ENCODE measurements at regions of chrX and their contacts with region 1.

Region 1: DNA sequence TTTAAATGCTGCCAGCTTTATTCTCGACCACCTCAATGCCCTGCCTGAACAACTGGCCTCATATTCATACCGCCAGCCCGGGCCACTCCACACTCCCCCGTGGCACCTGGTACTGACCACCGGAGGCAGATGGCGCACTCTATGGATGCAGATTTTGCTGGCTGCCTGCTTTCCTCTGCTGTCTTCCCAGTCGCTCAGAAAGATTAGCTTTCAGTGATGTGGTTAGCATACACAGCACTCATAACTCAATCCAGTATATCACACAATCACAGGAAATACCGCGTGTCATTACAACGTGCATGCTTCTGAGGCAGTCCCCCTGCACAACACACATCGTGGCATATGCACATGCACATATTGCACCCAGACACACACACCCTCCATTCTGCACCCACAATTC is 147.2 kb upstream of the BCOR start:
- DNase-seq: peak; percentile 68
- H3K4me3 ChIP-seq: no peak overlapping the region
- H3K27ac ChIP-seq: peak overlapping the region in 1 of 2 experiments; percentile 92; a peak in 2 of 4 replicates
- H3K4me1 ChIP-seq: peaks cover 0 to 31% of the 10 kb centered on the region in 2 experiments; a peak in 1 of 4 replicates
- H3K27me3 ChIP-seq: peaks cover 9% of the 10 kb centered on the region; the same call in 1 of the 2 replicates
- CTCF ChIP-seq: 0 out of 2 replicates have a peak, but pooled peaks have one; percentile 16
- EP300 ChIP-seq: peak in 1 of 2 experiments; percentile 57; a peak in 2 of 4 replicates
- RAD21 ChIP-seq: peak; percentile 38; the same call in 1 of the 2 replicates

Region 2: DNA sequence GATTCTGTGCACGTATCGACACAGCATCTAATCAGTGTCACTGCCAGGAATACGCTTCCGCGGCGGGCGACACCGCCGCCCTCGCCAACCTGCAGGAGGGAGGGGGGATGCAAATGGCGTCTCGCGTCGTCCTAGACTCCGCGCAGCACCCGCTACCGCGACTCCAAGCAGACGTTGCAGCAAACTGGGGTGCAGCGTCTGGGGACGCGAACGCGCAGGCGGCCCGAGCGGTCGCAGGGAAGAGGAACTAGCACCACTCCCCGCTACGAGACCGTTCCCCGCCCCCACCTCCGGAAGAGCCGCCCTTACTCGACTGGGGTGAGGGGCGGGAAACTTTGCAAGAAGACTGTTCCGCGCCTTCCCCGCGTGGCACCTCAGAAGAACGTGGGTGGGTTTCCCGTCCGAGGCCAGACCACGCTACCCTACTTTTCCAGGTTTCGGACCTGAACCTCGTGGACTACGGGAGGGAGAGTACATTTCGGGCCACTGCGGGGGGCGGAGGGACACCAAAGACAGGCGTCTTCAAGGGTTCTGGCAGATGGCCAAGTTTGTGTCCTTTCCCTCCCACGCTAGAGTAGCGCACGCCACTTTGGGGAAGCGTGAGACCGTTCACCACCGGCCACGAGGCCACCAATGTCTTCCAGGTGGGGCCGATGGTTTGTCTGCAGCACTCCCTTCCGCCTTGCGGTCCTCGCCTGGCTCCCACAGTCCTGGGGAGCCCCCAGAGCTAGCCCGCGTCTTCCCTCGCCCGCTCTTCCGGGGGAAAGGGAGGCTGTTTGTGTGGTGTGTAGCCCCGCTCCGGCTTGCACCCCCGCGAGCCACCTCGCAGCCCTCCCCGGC is 69.2 kb before region 1 on chrX:
- CTCF ChIA-PET with region 1: interaction called, 5 read pairs
- POLR2A ChIA-PET with region 1: interaction called, 18 read pairs
- DNase-seq: peak; percentile 68
- H3K4me3 ChIP-seq: peak overlapping the region; percentile 32 to 51; a peak in 3 of 4 replicates
- H3K27ac ChIP-seq: peak overlapping the region in 1 of 2 experiments; percentile 96; a peak in 2 of 4 replicates
- H3K4me1 ChIP-seq: peaks cover 0 to 20% of the 10 kb centered on the region in 2 experiments; a peak in 2 of 4 replicates
- H3K27me3 ChIP-seq: peaks cover 10% of the 10 kb centered on the region; the same call in 1 of the 2 replicates
- CTCF ChIP-seq: no peak
- EP300 ChIP-seq: no peak
- RAD21 ChIP-seq: 0 out of 2 replicates have a peak, but pooled peaks have one; percentile 8

Region 3: DNA sequence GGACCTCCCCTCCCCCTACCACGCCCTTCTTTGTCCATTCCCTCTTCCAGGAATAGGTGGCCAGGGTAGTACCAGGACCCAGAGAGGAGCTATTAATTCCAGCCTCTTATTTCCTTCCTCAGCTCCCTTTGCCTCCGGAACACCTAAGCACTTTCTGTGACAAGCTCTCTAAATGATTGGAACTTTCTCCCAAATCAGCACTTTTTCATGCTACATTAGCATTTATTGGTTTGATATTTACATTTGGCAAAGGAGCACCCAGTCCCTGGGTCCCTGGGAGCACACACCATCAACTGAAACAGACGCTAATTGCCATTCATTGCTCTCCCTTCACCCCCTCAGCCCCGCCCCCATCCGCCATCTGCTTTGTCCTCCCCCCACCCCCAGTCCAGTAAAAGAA is 34.8 kb after region 1 on chrX:
- CTCF ChIA-PET with region 1: no interaction called
- POLR2A ChIA-PET with region 1: no interaction called
- DNase-seq: no peak
- H3K4me3 ChIP-seq: no peak overlapping the region
- H3K27ac ChIP-seq: no peak overlapping the region
- H3K4me1 ChIP-seq: no peaks in the 10 kb centered on the region; a peak in 1 of 4 replicates
- H3K27me3 ChIP-seq: no peaks in the 10 kb centered on the region; the same call in 1 of the 2 replicates
- CTCF ChIP-seq: no peak
- EP300 ChIP-seq: no peak
- RAD21 ChIP-seq: no peak

Region 4: GRCh38 chrX:40806513-40807220 is 561.7 kb after region 1 on chrX:
- CTCF ChIA-PET with region 1: no interaction called
- POLR2A ChIA-PET with region 1: no interaction called
- DNase-seq: no peak
- H3K4me3 ChIP-seq: no peak overlapping the region
- H3K27ac ChIP-seq: no peak overlapping the region
- H3K4me1 ChIP-seq: no peaks in the 10 kb centered on the region
- H3K27me3 ChIP-seq: no peaks in the 10 kb centered on the region; the same call in 1 of the 2 replicates
- CTCF ChIP-seq: no peak
- EP300 ChIP-seq: no peak
- RAD21 ChIP-seq: no peak